ENCODE measurements at regions of chr12 and their contacts with region 1.

Region 1: DNA sequence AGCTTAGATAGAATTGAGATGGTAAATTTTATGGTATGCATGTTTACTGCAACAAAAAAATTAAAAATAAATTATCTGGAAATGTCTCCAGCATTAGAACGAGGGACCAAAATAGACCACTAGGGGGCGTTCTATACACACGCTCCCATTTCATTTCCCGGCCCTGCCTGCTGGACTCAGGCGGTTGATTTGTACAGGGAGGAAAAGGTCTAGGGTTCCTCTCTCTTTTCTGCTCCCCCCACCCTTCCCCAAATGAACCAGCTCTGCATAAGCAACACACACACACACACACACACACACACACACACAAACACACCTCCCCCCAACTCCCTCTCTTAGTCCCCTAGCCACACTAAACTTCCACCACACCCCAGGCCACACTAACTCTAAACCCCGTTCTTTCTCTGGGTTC is 7.8 kb upstream of the DTX1 start:
- DNase-seq: peak; percentile 84
- ATAC-seq: peak; percentile 86
- H3K4me3 ChIP-seq: no peak overlapping the region
- H3K27ac ChIP-seq: no peak overlapping the region
- H3K4me1 ChIP-seq: no peaks in the 10 kb centered on the region
- H3K27me3 ChIP-seq: peaks cover 32% of the 10 kb centered on the region
- CTCF ChIP-seq: peak; percentile 93

Region 2: DNA sequence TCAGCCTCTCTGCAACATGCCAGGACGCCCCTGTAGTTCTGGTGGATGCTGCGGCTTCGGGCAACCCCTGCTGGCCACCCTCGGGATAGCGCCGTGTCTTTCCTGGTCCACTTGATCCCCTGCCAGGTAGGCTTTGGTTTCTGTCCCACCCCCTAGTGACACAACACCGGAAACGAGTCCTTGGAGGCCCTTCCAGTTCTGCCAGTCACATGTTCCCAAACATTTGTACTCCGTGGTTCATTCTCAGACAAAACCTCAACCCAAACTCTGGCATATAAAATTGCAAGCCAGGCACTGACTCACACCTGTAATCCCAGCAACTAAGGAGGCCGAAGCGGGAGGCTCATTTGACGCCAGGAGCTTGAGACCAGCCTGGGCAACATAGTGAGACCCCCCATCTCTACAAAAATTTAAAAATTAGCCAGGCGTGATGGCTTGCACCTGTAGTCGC is 49.7 kb after region 1 on chr12:
- CTCF ChIA-PET with region 1: no interaction called
- POLR2A ChIA-PET with region 1: no interaction called
- intact Hi-C with region 1: loop called (anchors 1 kb)
- DNase-seq: peak; percentile 99
- ATAC-seq: peak; percentile 95
- H3K4me3 ChIP-seq: no peak overlapping the region
- H3K27ac ChIP-seq: 0 out of 2 replicates have a peak overlapping the region, but pooled peaks have one; percentile 10
- H3K4me1 ChIP-seq: 0 out of 2 replicates have a peak, but pooled peaks cover 4% of the 10 kb centered on the region
- H3K27me3 ChIP-seq: no peaks in the 10 kb centered on the region
- CTCF ChIP-seq: peak; percentile 95

Region 3: GRCh38 chr12:113152835-113153814 is 104.4 kb after region 1 on chr12:
- CTCF ChIA-PET with region 1: no interaction called
- POLR2A ChIA-PET with region 1: no interaction called
- intact Hi-C with region 1: loop called (anchors 1 kb)
- DNase-seq: peak; percentile 88
- ATAC-seq: peak; percentile 93
- H3K4me3 ChIP-seq: peak overlapping the region; percentile 68
- H3K27ac ChIP-seq: no peak overlapping the region
- H3K4me1 ChIP-seq: peaks cover 7% of the 10 kb centered on the region; the same call in 1 of the 2 replicates
- H3K27me3 ChIP-seq: no peaks in the 10 kb centered on the region
- CTCF ChIP-seq: peak; percentile 76

Region 4: GRCh38 chr12:113174461-113175384 is 126.0 kb after region 1 on chr12:
- CTCF ChIA-PET with region 1: no interaction called
- POLR2A ChIA-PET with region 1: interaction called, 5 read pairs
- intact Hi-C with region 1: loop called (anchors 1 kb)
- DNase-seq: peak; percentile 89
- ATAC-seq: peak; percentile 94
- H3K4me3 ChIP-seq: no peak overlapping the region
- H3K27ac ChIP-seq: no peak overlapping the region
- H3K4me1 ChIP-seq: no peaks in the 10 kb centered on the region
- H3K27me3 ChIP-seq: no peaks in the 10 kb centered on the region
- CTCF ChIP-seq: peak; percentile 96

Measured in PC-3 (cell line).